A673 (cell line): ENCODE measurements at regions of chr7 and their contacts with region 1.

Region 1: DNA sequence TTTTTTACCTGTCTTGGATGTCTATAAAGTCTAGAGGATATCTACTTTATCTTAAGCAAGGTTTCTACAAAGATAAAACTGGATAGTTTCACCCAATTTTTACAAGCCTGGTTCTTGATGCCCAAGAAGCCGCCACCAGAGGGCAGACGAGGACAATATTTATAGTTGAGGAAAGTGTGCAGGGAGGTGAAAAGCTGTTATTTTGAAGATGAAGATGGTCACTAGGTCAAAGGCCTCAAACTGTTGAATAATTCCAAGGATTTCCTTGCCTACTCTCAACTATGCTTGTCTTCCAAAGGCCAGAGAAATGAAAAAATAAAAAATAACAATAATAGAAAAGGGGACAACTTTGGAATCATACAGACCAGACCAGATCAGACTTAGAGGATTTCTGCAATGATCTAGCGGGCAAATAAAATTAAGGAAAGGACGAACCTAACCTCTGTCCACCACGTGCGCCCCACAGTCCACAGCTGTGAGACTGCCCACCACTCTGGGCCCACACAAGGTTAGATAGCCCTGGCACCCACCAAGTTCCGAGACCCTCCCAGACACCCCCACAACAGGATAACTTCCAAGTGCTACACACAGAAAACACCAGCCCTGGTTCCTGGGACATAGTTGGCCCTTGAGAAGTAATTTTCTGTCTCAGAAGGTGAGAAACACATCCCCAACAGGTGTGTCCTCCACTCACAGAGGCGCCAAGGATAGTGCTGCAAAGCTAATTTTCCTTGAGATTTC is 2.8 kb downstream of the PKD1L1 start:
- DNase-seq: peak; percentile 70
- H3K4me3 ChIP-seq: no peak overlapping the region
- H3K27ac ChIP-seq: no peak overlapping the region
- H3K4me1 ChIP-seq: peaks cover 4% of the 10 kb centered on the region
- H3K27me3 ChIP-seq: no peaks in the 10 kb centered on the region
- CTCF ChIP-seq: peak; percentile 87

Region 2: DNA sequence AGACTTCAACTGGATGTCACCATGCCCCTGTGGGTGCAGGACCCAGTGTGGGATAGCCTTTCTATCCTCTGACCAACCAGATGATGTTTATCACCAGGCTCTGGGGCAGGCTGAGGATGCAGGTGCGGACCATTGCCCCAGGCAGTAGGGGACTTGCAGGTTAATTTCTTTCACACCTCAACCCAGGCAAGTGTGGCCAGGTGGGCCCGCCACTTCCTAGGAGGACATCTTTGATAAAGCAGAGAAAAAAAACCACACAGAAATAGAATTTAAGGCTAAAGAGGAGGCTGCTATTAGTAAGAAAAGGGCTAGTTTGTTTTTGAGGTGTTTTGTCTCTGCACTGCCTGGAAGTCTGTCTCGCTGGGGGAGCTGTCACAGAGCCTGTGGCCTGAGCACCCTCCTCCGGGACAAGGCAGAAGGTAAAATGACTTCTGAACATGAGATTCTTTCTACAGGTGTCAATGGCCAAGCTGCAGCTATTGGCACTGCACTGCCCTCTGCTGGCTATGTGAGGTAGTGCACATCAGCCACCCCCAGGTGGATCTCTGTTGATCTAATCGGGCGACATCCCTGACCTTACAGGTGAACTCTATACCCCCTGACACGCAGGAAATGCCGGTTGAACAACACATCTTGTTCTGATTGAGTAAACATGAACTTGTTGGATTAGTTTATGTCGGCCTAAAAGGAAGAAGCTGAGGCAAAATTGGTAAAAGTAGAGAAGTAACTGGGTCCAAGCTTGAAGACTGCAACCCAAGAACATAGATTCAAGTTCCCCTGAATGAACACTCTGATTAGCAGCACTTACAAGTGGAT is 164.6 kb after region 1 on chr7:
- CTCF ChIA-PET with region 1: interaction called, 18 read pairs
- POLR2A ChIA-PET with region 1: no interaction called
- intact Hi-C with region 1: loop called (anchors 1 kb)
- DNase-seq: peak; percentile 54
- H3K4me3 ChIP-seq: no peak overlapping the region
- H3K27ac ChIP-seq: no peak overlapping the region
- H3K4me1 ChIP-seq: no peaks in the 10 kb centered on the region
- H3K27me3 ChIP-seq: no peaks in the 10 kb centered on the region
- CTCF ChIP-seq: peak; percentile 98

Region 3: GRCh38 chr7:48154792-48155413 is 209.5 kb after region 1 on chr7:
- CTCF ChIA-PET with region 1: interaction called, 5 read pairs
- POLR2A ChIA-PET with region 1: no interaction called
- intact Hi-C with region 1: loop called (anchors 2 kb)
- DNase-seq: peak; percentile 61
- H3K4me3 ChIP-seq: no peak overlapping the region
- H3K27ac ChIP-seq: no peak overlapping the region
- H3K4me1 ChIP-seq: no peaks in the 10 kb centered on the region
- H3K27me3 ChIP-seq: no peaks in the 10 kb centered on the region
- CTCF ChIP-seq: peak; percentile 71

Region 4: GRCh38 chr7:49852619-49853462 is 1907.4 kb after region 1 on chr7:
- CTCF ChIA-PET with region 1: no interaction called
- POLR2A ChIA-PET with region 1: no interaction called
- intact Hi-C with region 1: loop called (anchors 5 kb)
- DNase-seq: peak; percentile 44
- H3K4me3 ChIP-seq: no peak overlapping the region
- H3K27ac ChIP-seq: no peak overlapping the region
- H3K4me1 ChIP-seq: no peaks in the 10 kb centered on the region
- H3K27me3 ChIP-seq: no peaks in the 10 kb centered on the region
- CTCF ChIP-seq: peak; percentile 59